Heart right ventricle (tissue), 16 donors: ENCODE measurements at regions of chr11 and their contacts with region 1.

Region 1: DNA sequence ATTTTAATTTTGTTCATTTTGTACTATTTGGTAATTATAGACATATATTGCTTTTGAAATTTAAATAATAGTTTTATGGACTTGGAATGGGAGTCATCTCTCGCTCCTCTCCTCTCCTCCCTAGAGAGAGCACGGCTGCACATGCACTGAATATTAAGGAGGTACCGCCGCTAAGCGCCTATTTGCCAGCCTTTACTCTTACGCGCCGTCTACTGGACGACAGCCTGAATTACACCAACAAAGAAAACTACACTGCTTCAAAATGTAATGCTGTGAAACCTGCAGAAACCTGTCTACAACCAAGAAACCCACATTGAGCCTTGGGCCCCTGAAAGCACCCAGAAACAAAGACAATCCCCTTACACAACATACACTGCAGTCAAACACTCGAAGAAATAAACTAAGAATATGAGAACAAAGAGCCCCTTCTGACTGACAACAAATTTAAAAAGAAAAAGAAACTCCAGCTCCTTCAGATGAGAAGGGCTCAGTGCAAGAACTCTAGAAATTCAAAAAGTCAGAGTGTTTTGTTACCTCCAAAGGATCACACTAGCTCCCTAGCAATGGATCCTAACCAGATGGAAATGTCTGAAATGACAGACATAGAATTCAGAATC is 737.2 kb downstream of the LRRC4C start:
- DNase-seq: no peak
- ATAC-seq: no peak
- H3K4me3 ChIP-seq: no peak overlapping the region
- H3K27ac ChIP-seq: no peak overlapping the region
- H3K4me1 ChIP-seq: no peaks in the 10 kb centered on the region
- H3K27me3 ChIP-seq: no peaks in the 10 kb centered on the region
- CTCF ChIP-seq: peak in 4 of 9 donors; percentile 28 to 41 (median 34)

Region 2: DNA sequence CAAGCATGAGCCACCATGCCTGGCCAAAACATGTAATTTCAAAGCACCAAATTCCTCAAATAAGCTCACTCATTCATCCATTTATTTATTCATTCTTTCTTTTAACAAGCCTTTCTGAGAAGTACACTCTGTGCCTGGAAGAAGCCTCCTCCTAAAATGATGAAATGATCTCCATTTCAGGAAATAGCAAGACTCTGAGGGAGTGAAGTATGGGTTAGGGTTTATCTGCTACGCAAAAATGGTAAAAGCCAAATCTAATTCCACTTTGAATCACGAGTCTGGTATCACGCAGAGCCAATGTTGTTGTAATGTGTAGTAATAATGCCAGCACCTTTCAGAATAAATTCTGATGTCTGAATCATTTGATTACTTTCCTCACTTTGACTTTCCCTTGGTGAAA is 304.7 kb before region 1 on chr11:
- intact Hi-C with region 1: no loop called
- DNase-seq: no peak
- ATAC-seq: no peak
- H3K4me3 ChIP-seq: no peak overlapping the region
- H3K27ac ChIP-seq: no peak overlapping the region
- H3K4me1 ChIP-seq: no peaks in the 10 kb centered on the region
- H3K27me3 ChIP-seq: no peaks in the 10 kb centered on the region
- CTCF ChIP-seq: no peak

Region 3: GRCh38 chr11:40679276-40679675 is 43.0 kb before region 1 on chr11:
- intact Hi-C with region 1: loop called in 1 of 10 experiments (anchors 5 kb)
- DNase-seq: no peak
- ATAC-seq: no peak
- H3K4me3 ChIP-seq: no peak overlapping the region
- H3K27ac ChIP-seq: no peak overlapping the region
- H3K4me1 ChIP-seq: no peaks in the 10 kb centered on the region
- H3K27me3 ChIP-seq: no peaks in the 10 kb centered on the region
- CTCF ChIP-seq: no peak